ENCODE measurements at regions of chr19 and their contacts with region 1.

Region 1: GRCh38 chr19:32971715-32972540 is at the starts of genes CEP89 and FAAP24:
- DNase-seq: peak; percentile 99 to 100 (median 100)
- ATAC-seq: peak; percentile 100
- H3K4me3 ChIP-seq: peak within 1 kb of the TSS; percentile 72
- H3K27ac ChIP-seq: peak within 1 kb of the TSS; percentile 70
- H3K4me1 ChIP-seq: peaks cover 0 to 18% of the 10 kb centered on the region in 2 experiments; a peak in 4 of 5 replicates
- H3K27me3 ChIP-seq: no peaks in the 10 kb centered on the region
- CTCF ChIP-seq: no peak; a peak in 1 of 6 replicates
- EP300 ChIP-seq: peak; percentile 36
- POLR2A ChIP-seq: peak; percentile 88
- RAD21 ChIP-seq: no peak
- polyA plus RNA-seq, gene CEP89: 5.5 to 7.0 TPM
- polyA plus RNA-seq, gene FAAP24: 16.0 to 21.6 TPM

Region 2: GRCh38 chr19:31995546-31995945 is 976.4 kb before region 1 on chr19:
- CTCF ChIA-PET with region 1: no interaction called
- POLR2A ChIA-PET with region 1: no interaction called
- in situ Hi-C with region 1: no loop called
- intact Hi-C with region 1: no loop called
- DNase-seq: no peak
- ATAC-seq: no peak
- H3K4me3 ChIP-seq: no peak overlapping the region
- H3K27ac ChIP-seq: no peak overlapping the region
- H3K4me1 ChIP-seq: no peaks in the 10 kb centered on the region
- H3K27me3 ChIP-seq: no peaks in the 10 kb centered on the region
- CTCF ChIP-seq: no peak
- EP300 ChIP-seq: no peak
- POLR2A ChIP-seq: no peak
- RAD21 ChIP-seq: no peak

Region 3: DNA sequence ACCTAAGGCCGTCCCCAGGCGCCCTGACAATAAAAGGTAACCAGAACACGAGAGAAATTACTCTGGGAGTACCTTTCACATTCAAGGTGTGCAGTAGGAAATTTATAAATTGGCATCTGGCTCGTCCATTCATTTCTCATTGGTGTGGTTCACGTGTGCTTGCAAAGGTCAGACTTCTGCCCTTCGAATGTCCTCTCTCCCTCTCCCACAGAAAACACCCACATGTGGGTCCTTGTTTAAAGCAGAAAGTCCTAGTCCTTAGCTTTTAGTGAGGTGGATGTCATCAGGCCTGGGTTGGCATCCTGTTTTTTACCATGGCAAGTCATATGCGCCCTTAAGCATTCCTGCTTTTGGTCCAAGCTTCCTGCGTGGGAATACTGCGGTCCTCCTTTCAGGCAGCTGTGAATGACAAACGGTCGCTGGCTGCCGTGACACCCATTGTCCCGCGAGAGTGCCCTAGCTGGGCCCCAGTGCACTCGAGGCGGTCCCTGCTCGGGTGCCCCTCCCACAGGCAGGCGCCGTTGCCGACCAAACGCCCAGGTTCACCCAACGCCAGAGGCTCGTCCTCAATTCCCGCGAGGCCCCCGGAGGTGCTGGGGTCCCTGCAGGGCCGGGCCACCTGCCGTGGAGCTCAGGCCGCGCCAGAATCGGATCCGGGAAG is 280.5 kb before region 1 on chr19 and contains the start of gene NUDT19:
- CTCF ChIA-PET with region 1: no interaction called
- POLR2A ChIA-PET with region 1: no interaction called
- in situ Hi-C with region 1: no loop called
- intact Hi-C with region 1: loop called (anchors 10 kb)
- DNase-seq: peak; percentile 79 to 90 (median 82)
- ATAC-seq: peak; percentile 88
- H3K4me3 ChIP-seq: peak within 1 kb of the TSS; percentile 73
- H3K27ac ChIP-seq: peak within 1 kb of the TSS; percentile 86
- H3K4me1 ChIP-seq: peaks cover 22 to 35% of the 10 kb centered on the region in 2 experiments; a peak in 4 of 5 replicates
- H3K27me3 ChIP-seq: no peaks in the 10 kb centered on the region
- CTCF ChIP-seq: no peak
- EP300 ChIP-seq: no peak
- POLR2A ChIP-seq: peak; percentile 84
- RAD21 ChIP-seq: no peak
- polyA plus RNA-seq, gene NUDT19: 28.2 to 38.6 TPM

Region 4: DNA sequence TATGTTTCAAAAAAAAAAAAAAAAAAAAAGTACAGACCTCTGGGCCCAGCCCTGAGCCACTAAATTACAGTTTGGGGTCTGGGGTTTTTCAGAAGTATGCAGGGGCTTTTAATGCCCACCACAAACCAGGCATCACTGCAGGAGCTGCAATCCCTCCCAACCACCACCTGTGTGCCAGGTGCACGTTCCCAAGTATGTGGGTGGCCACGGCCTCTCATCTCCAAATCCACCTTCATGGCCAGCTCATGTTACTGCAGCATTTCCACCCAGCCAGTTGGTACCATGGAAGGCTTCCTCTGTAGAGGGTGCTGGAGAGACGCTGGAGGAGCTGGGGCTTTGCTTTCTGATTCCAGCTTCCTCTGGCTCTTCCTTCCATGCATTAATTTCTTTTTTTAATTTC is 26.7 kb before region 1 on chr19:
- CTCF ChIA-PET with region 1: no interaction called
- POLR2A ChIA-PET with region 1: no interaction called
- in situ Hi-C with region 1: no loop called
- intact Hi-C with region 1: no loop called
- DNase-seq: no peak
- ATAC-seq: peak; percentile 47; the same call in 1 of the 3 replicates
- H3K4me3 ChIP-seq: no peak overlapping the region
- H3K27ac ChIP-seq: no peak overlapping the region
- H3K4me1 ChIP-seq: no peaks in the 10 kb centered on the region
- H3K27me3 ChIP-seq: no peaks in the 10 kb centered on the region; a peak in 1 of 5 replicates
- CTCF ChIP-seq: peak in 2 of 3 experiments; percentile 10 to 29; a peak in 3 of 6 replicates
- EP300 ChIP-seq: no peak
- POLR2A ChIP-seq: no peak
- RAD21 ChIP-seq: no peak

Region 5: GRCh38 chr19:33118643-33119042 is 146.7 kb after region 1 on chr19:
- CTCF ChIA-PET with region 1: interaction called, 27 read pairs
- POLR2A ChIA-PET with region 1: no interaction called
- in situ Hi-C with region 1: loop called (anchors 5 kb)
- intact Hi-C with region 1: loop called (anchors 1 kb)
- DNase-seq: no peak
- ATAC-seq: no peak
- H3K4me3 ChIP-seq: no peak overlapping the region
- H3K27ac ChIP-seq: no peak overlapping the region
- H3K4me1 ChIP-seq: peaks cover 0 to under 1% of the 10 kb centered on the region in 2 experiments; a peak in 1 of 5 replicates
- H3K27me3 ChIP-seq: no peaks in the 10 kb centered on the region
- CTCF ChIP-seq: no peak
- EP300 ChIP-seq: no peak
- POLR2A ChIP-seq: no peak
- RAD21 ChIP-seq: no peak

Region 6: DNA sequence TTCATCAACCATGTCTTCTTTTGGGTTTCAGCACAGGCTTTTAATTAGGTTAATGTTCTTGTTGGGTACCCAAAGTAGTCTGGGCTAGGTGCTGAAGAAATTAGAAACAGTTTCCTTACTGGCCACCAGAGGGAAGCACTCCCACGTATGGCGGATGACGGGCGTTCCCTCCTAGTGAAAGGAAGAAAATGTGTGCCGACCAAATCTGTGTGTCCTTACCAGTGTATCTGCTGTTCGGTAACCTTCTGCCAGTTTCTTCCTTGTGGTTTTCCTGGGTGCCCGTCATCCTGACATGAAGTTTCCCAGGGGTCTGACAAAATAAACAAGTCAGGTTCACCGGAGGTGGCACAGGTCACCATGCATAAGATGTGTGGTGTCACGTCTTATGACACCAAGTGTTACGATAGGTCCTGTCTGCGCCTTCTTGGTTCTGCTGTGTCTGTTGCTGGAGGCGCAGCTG is 154.0 kb after region 1 on chr19:
- CTCF ChIA-PET with region 1: interaction called, 5 read pairs
- POLR2A ChIA-PET with region 1: interaction called, 7 read pairs
- in situ Hi-C with region 1: loop called (anchors 5 kb)
- intact Hi-C with region 1: no loop called
- DNase-seq: peak; percentile 71 to 75 (median 72)
- ATAC-seq: peak; percentile 90
- H3K4me3 ChIP-seq: no peak overlapping the region
- H3K27ac ChIP-seq: no peak overlapping the region
- H3K4me1 ChIP-seq: peaks cover 10 to 20% of the 10 kb centered on the region in 2 experiments; a peak in 3 of 5 replicates
- H3K27me3 ChIP-seq: no peaks in the 10 kb centered on the region
- CTCF ChIP-seq: peak; percentile 81 to 86 (median 85)
- EP300 ChIP-seq: no peak
- POLR2A ChIP-seq: no peak
- RAD21 ChIP-seq: peak; percentile 52 to 75

Region 7: DNA sequence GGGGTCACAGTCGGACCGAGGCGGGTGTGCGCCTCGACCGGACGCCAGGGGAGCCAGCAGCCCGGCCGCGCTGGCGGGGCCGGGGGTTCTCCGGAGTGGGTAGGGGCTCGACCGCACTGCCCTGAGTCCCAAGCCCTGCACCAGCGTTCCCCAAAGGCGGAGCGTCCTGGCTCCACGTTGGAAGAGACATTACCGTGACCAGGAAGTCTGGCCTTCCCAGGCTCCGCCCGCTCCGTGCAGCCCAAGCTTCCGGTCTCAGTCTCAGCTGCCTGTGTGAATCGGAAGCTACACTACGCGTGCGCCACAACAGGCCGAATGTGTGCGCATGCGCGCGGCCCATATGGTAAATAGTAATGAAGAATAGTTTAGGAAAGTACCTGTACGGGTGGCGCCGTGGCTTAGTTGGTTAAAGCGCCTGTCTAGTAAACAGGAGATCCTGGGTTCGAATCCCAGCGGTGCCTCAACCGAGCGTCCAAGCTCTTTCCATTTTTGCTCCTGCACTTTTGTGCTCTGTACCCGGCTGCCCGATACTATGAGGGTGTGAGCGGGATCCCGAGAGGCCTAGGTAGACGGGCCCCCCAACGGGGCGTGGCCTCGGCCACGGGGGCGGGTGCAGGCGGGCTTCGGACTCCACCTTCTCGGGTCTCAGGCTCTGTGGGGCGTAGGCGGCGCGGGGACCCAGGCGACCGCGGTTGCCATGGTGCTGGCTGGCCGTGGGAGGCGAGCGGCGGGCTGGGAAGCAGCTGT is 204.9 kb after region 1 on chr19:
- CTCF ChIA-PET with region 1: interaction called, 3 read pairs
- POLR2A ChIA-PET with region 1: interaction called, 6 read pairs
- in situ Hi-C with region 1: no loop called
- intact Hi-C with region 1: loop called (anchors 5 kb)
- DNase-seq: peak; percentile 98 to 99 (median 99)
- ATAC-seq: peak; percentile 95
- H3K4me3 ChIP-seq: peak overlapping the region; percentile 72
- H3K27ac ChIP-seq: peak overlapping the region; percentile 85
- H3K4me1 ChIP-seq: peaks cover 12 to 30% of the 10 kb centered on the region in 2 experiments; a peak in 4 of 5 replicates
- H3K27me3 ChIP-seq: peaks cover 6 to 7% of the 10 kb centered on the region in 2 experiments; a peak in 3 of 5 replicates
- CTCF ChIP-seq: peak in 2 of 3 experiments; percentile 36 to 46; a peak in 3 of 6 replicates
- EP300 ChIP-seq: peak; percentile 85
- POLR2A ChIP-seq: peak; percentile 96
- RAD21 ChIP-seq: no peak

Region 8: GRCh38 chr19:33186431-33187182 is 214.7 kb after region 1 on chr19:
- CTCF ChIA-PET with region 1: no interaction called
- POLR2A ChIA-PET with region 1: no interaction called
- in situ Hi-C with region 1: no loop called
- intact Hi-C with region 1: loop called (anchors 1 kb)
- DNase-seq: no peak
- ATAC-seq: no peak
- H3K4me3 ChIP-seq: no peak overlapping the region
- H3K27ac ChIP-seq: no peak overlapping the region
- H3K4me1 ChIP-seq: no peaks in the 10 kb centered on the region; a peak in 1 of 5 replicates
- H3K27me3 ChIP-seq: peaks cover 6 to 20% of the 10 kb centered on the region in 2 experiments; a peak in 4 of 5 replicates
- CTCF ChIP-seq: no peak
- EP300 ChIP-seq: no peak
- POLR2A ChIP-seq: no peak
- RAD21 ChIP-seq: no peak

Measured in K562 (cell line).